ENCODE measurements at regions of chr2 and their contacts with region 1.

Region 1: GRCh38 chr2:8477552-8478470 is 204.0 kb upstream of the ID2 start:
- DNase-seq: peak; percentile 55 to 66 (median 60)
- H3K4me3 ChIP-seq: peak overlapping the region; percentile 27 to 41
- H3K4me3 Mint-ChIP-seq: peak overlapping the region; percentile 75 to 94 (median 82)
- H3K27ac ChIP-seq: peak overlapping the region; percentile 70
- H3K27ac Mint-ChIP-seq: peak overlapping the region; percentile 92 to 98 (median 96)
- H3K4me1 ChIP-seq: peaks cover 95% of the 10 kb centered on the region
- H3K4me1 Mint-ChIP-seq: peaks cover 66 to 100% (median 88%) of the 10 kb centered on the region in 4 donors
- H3K27me3 ChIP-seq: no peaks in the 10 kb centered on the region
- H3K27me3 Mint-ChIP-seq: no peaks in the 10 kb centered on the region

Region 2: GRCh38 chr2:8004250-8004681 is 473.5 kb before region 1 on chr2:
- CTCF ChIA-PET with region 1: no interaction called
- POLR2A ChIA-PET with region 1: no interaction called
- intact Hi-C with region 1: loop called (anchors 10 kb)
- DNase-seq: no peak
- H3K4me3 ChIP-seq: no peak overlapping the region
- H3K4me3 Mint-ChIP-seq: no peak overlapping the region
- H3K27ac ChIP-seq: no peak overlapping the region
- H3K27ac Mint-ChIP-seq: no peak overlapping the region
- H3K4me1 ChIP-seq: no peaks in the 10 kb centered on the region
- H3K4me1 Mint-ChIP-seq: no peaks in the 10 kb centered on the region
- H3K27me3 ChIP-seq: no peaks in the 10 kb centered on the region
- H3K27me3 Mint-ChIP-seq: no peaks in the 10 kb centered on the region

Measured in CD4-positive, alpha-beta memory T cell (primary cell).